Panc1 (cell line): ENCODE measurements at regions of chr12 and their contacts with region 1.

Region 1: GRCh38 chr12:100404769-100405407 is 48.0 kb downstream of the SLC17A8 start:
- DNase-seq: peak; percentile 10
- ATAC-seq: no peak
- H3K4me3 ChIP-seq: no peak overlapping the region
- H3K27ac ChIP-seq: no peak overlapping the region
- H3K4me1 ChIP-seq: no peaks in the 10 kb centered on the region
- H3K27me3 ChIP-seq: peaks cover 2% of the 10 kb centered on the region; the same call in 1 of the 2 replicates
- CTCF ChIP-seq: peak; percentile 70

Region 2: GRCh38 chr12:100453951-100454350 is 49.1 kb after region 1 on chr12:
- CTCF ChIA-PET with region 1: no interaction called
- POLR2A ChIA-PET with region 1: no interaction called
- in situ Hi-C with region 1: no loop called
- intact Hi-C with region 1: no loop called
- DNase-seq: no peak
- ATAC-seq: no peak
- H3K4me3 ChIP-seq: no peak overlapping the region
- H3K27ac ChIP-seq: no peak overlapping the region
- H3K4me1 ChIP-seq: no peaks in the 10 kb centered on the region
- H3K27me3 ChIP-seq: no peaks in the 10 kb centered on the region
- CTCF ChIP-seq: no peak

Region 3: GRCh38 chr12:100473716-100474150 is 68.8 kb after region 1 on chr12 and contains the start of gene NR1H4:
- CTCF ChIA-PET with region 1: no interaction called
- POLR2A ChIA-PET with region 1: no interaction called
- in situ Hi-C with region 1: no loop called
- intact Hi-C with region 1: no loop called
- DNase-seq: no peak
- ATAC-seq: no peak
- H3K4me3 ChIP-seq: no peak within 1 kb of the TSS
- H3K27ac ChIP-seq: no peak within 1 kb of the TSS
- H3K4me1 ChIP-seq: no peaks in the 10 kb centered on the region
- H3K27me3 ChIP-seq: peaks cover 9% of the 10 kb centered on the region
- CTCF ChIP-seq: no peak
- total RNA-seq, gene NR1H4: not detected

Region 4: GRCh38 chr12:100508751-100509150 is 103.9 kb after region 1 on chr12:
- CTCF ChIA-PET with region 1: interaction called, 3 read pairs
- POLR2A ChIA-PET with region 1: interaction called, 12 read pairs
- in situ Hi-C with region 1: no loop called
- intact Hi-C with region 1: no loop called
- DNase-seq: no peak
- ATAC-seq: no peak
- H3K4me3 ChIP-seq: no peak overlapping the region
- H3K27ac ChIP-seq: no peak overlapping the region
- H3K4me1 ChIP-seq: no peaks in the 10 kb centered on the region
- H3K27me3 ChIP-seq: no peaks in the 10 kb centered on the region
- CTCF ChIP-seq: no peak